ENCODE measurements at regions of chr6 and their contacts with region 1.

Region 1: GRCh38 chr6:151702851-151703611 is 104.5 kb upstream of the ESR1 start:
- DNase-seq: no peak
- ATAC-seq: peak; percentile 11
- H3K4me3 Mint-ChIP-seq: no peak overlapping the region
- H3K27ac Mint-ChIP-seq: peak overlapping the region; percentile 35
- H3K4me1 Mint-ChIP-seq: peaks cover 36% of the 10 kb centered on the region
- H3K27me3 Mint-ChIP-seq: peaks cover 7% of the 10 kb centered on the region

Region 2: DNA sequence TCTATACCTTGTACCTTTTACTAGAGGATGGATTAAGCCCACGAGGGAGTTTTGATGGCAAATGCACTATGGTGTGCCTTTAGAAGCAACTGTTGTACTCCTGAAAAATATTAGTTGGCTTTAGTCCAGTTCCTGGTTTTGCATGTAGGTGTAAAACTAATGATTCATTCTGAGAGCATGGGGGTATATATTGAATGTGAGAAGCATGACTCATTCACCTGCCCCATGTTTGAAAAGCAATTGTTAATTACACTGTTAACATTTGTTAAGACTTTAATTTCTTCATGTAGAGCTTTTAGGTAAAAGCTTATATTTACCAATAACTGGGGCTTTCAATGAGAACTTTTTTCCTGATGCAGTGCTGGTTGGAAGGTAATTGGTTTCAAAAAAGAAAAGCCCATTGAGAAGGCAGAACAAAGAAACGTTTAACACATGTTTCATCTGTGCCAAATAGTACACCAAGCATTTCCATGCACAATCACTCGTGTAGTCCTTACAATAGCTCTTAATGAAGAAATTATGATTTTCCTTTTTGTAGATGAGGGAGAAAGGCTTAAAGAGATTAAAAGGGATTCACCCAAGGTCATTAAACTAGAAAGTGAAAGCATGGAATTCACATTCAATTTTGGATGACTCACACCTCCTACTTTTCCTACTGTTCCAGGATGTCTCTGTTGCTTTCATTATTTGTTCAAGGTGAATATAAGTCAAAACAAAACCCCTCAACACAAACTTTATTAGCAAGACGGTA is 75.2 kb before region 1 on chr6:
- CTCF ChIA-PET with region 1: no interaction called
- POLR2A ChIA-PET with region 1: no interaction called
- intact Hi-C with region 1: loop called in 1 of 2 experiments (anchors 5 kb)
- DNase-seq: no peak
- ATAC-seq: peak; percentile 83
- H3K4me3 Mint-ChIP-seq: no peak overlapping the region
- H3K27ac Mint-ChIP-seq: no peak overlapping the region
- H3K4me1 Mint-ChIP-seq: peaks cover 18% of the 10 kb centered on the region
- H3K27me3 Mint-ChIP-seq: peaks cover 18% of the 10 kb centered on the region

Region 3: DNA sequence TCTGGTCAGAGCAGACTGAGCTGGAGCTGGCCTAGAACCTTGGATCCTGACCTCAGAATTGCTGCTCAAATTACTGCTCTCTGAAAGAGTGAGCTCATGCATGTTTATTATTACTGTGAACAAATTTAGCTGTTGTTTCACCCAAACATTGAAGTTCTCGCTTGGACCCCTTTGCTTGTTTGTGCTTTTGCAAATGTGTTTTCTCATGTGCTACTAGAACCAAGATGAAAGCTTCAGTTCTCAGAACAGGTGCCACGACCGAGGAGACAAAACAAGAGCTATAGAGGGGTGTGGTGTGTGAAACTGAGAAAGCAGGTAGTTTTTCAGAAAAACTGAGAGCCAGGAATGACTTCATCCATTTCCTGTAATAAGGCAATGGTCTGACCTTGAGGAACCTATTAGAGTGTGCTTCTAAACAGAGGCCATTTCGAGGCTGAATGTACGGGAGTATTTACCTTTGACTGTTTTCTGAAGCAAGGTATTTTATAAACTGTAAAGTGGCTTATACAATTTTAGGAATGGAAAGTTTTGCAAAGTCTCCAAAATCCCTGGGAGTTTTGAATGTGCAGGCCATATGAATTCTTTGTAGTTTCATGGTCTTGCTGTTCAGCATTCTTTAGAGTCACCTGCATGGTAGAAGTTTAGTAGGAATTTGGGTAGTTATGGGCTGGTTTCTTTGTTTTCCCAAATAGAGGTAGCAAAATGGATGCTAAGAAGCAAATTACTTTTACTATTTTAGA is 54.6 kb after region 1 on chr6:
- CTCF ChIA-PET with region 1: interaction called, 3 read pairs
- POLR2A ChIA-PET with region 1: interaction called, 5 read pairs
- intact Hi-C with region 1: loop called (anchors 1 kb)
- DNase-seq: peak; percentile 62
- ATAC-seq: peak; percentile 90
- H3K4me3 Mint-ChIP-seq: no peak overlapping the region
- H3K27ac Mint-ChIP-seq: peak overlapping the region; percentile 82
- H3K4me1 Mint-ChIP-seq: peaks cover 25% of the 10 kb centered on the region
- H3K27me3 Mint-ChIP-seq: peaks cover 2% of the 10 kb centered on the region

Measured in activated CD4-positive, alpha-beta T cell treated with anti-CD3 and anti-CD28 coated beads for 36 hours (primary cell).